Naive thymus-derived CD4-positive, alpha-beta T cell (primary cell): ENCODE measurements at regions of chr7 and their contacts with region 1.

Region 1: DNA sequence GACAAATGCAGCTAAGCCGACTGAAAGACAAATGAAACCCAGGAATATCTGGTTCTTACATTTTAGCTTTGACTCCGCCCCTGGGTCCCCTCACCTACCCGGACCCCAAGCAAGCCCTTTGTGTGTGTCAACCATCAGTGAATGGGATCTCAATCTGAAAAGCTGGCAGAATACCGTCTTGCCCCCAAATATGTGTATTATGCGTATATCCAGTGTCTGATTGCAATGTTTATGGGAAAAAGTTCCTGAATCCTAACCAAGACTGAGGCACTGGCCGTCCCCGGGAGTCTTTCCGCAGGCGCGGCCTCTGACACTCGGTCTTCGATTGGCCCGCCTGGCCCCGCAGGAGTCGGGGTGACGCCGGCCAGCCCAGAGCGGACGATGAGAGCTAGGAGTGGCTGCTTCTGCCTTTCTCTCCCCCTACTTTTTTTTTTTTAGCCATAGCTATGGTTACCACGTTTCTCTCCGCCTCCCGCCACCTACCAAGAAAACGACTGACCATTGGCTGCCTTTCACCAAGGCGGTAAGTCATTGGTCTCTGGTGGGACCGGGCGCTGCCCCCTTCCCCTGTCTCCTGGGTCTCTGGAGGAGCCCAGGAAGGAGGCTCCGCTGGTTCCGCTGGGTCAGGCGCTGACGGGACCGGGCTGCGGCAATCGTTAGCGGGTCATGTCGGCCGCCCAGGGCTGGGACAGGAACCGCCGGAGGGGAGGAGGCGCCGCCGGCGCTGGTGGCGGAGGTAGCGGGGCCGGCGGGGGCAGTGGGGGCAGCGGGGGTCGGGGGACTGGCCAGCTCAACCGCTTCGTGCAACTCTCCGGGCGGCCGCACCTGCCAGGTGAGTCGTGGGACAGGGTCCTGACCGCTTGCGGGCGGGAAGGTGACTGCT is at the start of gene KLHDC10:
- DNase-seq: peak; percentile 84 to 98 (median 96)
- ATAC-seq: peak; percentile 99
- H3K4me3 ChIP-seq: peak within 1 kb of the TSS; percentile 54
- H3K4me3 Mint-ChIP-seq: peak within 1 kb of the TSS; percentile 80 to 95 (median 92)
- H3K27ac ChIP-seq: peak within 1 kb of the TSS; percentile 82
- H3K27ac Mint-ChIP-seq: peak within 1 kb of the TSS; percentile 81 to 97 (median 90)
- H3K4me1 ChIP-seq: peaks cover 12 to 18% of the 10 kb centered on the region in 2 donors
- H3K4me1 Mint-ChIP-seq: peaks cover 34 to 51% (median 42%) of the 10 kb centered on the region in 7 donors
- H3K27me3 ChIP-seq: no peaks in the 10 kb centered on the region
- H3K27me3 Mint-ChIP-seq: peaks cover 0 to 2% (median 0%) of the 10 kb centered on the region in 5 donors
- total RNA-seq, gene KLHDC10: 14.5 to 20.4 (median 17.3) TPM

Region 2: GRCh38 chr7:128739048-128739962 is 1330.9 kb before region 1 on chr7 and contains the start of gene CALU:
- CTCF ChIA-PET with region 1: no interaction called
- POLR2A ChIA-PET with region 1: no interaction called
- intact Hi-C with region 1: loop called in 1 of 2 experiments (anchors 2 kb)
- DNase-seq: peak; percentile 87 to 95 (median 94)
- ATAC-seq: peak; percentile 98
- H3K4me3 ChIP-seq: peak within 1 kb of the TSS; percentile 86
- H3K4me3 Mint-ChIP-seq: peak within 1 kb of the TSS; percentile 89 to 100 (median 97)
- H3K27ac ChIP-seq: peak within 1 kb of the TSS; percentile 85
- H3K27ac Mint-ChIP-seq: peak within 1 kb of the TSS; percentile 96 to 99 (median 98)
- H3K4me1 ChIP-seq: peaks cover 13% of the 10 kb centered on the region in 2 donors
- H3K4me1 Mint-ChIP-seq: peaks cover 11 to 52% (median 45%) of the 10 kb centered on the region in 7 donors
- H3K27me3 ChIP-seq: no peaks in the 10 kb centered on the region
- H3K27me3 Mint-ChIP-seq: peaks cover 0 to 5% (median 0%) of the 10 kb centered on the region in 5 donors
- total RNA-seq, gene CALU: 18.6 to 36.2 (median 22.6) TPM

Region 3: GRCh38 chr7:130050773-130051125 is 19.5 kb before region 1 on chr7:
- CTCF ChIA-PET with region 1: interaction called, 5 read pairs
- POLR2A ChIA-PET with region 1: interaction called, 8 read pairs
- intact Hi-C with region 1: loop called (anchors 1 kb)
- DNase-seq: no peak
- ATAC-seq: no peak
- H3K4me3 ChIP-seq: peak overlapping the region; percentile 86
- H3K4me3 Mint-ChIP-seq: peak overlapping the region; percentile 94 to 99 (median 98)
- H3K27ac ChIP-seq: peak overlapping the region; percentile 78
- H3K27ac Mint-ChIP-seq: peak overlapping the region; percentile 90 to 99 (median 95)
- H3K4me1 ChIP-seq: peaks cover 5 to 8% of the 10 kb centered on the region in 2 donors
- H3K4me1 Mint-ChIP-seq: peaks cover 6 to 29% (median 14%) of the 10 kb centered on the region in 7 donors
- H3K27me3 ChIP-seq: no peaks in the 10 kb centered on the region
- H3K27me3 Mint-ChIP-seq: peaks cover 0 to 3% (median 0%) of the 10 kb centered on the region in 5 donors

Region 4: DNA sequence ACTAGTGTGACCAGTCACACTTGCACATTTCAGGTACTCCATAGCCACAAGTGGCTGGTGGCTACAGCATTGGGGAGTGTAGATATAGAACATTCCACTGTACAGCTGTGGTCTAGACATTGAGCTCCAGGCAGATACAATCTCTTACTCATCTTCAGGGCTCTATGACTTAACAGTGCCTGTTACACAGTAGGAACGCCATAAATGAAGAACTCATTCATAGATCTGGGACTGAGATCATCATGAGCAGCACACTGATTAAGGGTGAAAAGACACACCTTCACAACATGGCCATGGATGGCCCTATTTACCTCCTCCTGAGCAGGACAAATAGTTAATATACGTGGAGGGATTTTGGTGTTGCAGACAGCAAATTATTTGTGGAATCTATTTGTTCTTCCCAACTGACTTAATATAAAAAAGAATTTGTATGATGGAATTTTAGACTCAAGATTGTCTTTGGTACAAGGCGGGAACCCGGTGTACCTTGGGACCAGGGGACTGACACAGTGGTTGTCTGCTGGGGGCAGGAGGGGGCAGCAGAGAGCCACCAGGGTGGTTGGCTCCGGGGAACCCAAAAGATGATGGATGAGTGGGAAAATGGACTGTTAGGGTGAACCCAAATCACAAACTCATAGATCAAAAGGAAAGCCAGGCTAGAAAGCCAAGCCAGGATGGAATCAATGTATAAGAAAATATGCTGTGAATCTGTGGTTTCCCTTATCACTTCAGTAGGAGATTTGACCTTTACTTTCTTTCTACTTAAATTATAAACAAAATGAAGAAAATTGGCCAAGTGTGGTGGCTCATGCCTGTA is 172.2 kb after region 1 on chr7:
- CTCF ChIA-PET with region 1: interaction called, 3 read pairs
- POLR2A ChIA-PET with region 1: no interaction called
- intact Hi-C with region 1: loop called (anchors 1 to 2 kb)
- DNase-seq: peak; percentile 35 to 67 (median 47)
- ATAC-seq: peak; percentile 77
- H3K4me3 ChIP-seq: no peak overlapping the region
- H3K4me3 Mint-ChIP-seq: peak overlapping the region in 1 of 10 donors; percentile 66
- H3K27ac ChIP-seq: no peak overlapping the region
- H3K27ac Mint-ChIP-seq: peak overlapping the region in 1 of 9 donors; percentile 68
- H3K4me1 ChIP-seq: no peaks in the 10 kb centered on the region
- H3K4me1 Mint-ChIP-seq: peaks cover 0 to 12% (median 8%) of the 10 kb centered on the region in 7 donors
- H3K27me3 ChIP-seq: no peaks in the 10 kb centered on the region
- H3K27me3 Mint-ChIP-seq: peaks cover 0 to 11% (median 0%) of the 10 kb centered on the region in 5 donors

Region 5: DNA sequence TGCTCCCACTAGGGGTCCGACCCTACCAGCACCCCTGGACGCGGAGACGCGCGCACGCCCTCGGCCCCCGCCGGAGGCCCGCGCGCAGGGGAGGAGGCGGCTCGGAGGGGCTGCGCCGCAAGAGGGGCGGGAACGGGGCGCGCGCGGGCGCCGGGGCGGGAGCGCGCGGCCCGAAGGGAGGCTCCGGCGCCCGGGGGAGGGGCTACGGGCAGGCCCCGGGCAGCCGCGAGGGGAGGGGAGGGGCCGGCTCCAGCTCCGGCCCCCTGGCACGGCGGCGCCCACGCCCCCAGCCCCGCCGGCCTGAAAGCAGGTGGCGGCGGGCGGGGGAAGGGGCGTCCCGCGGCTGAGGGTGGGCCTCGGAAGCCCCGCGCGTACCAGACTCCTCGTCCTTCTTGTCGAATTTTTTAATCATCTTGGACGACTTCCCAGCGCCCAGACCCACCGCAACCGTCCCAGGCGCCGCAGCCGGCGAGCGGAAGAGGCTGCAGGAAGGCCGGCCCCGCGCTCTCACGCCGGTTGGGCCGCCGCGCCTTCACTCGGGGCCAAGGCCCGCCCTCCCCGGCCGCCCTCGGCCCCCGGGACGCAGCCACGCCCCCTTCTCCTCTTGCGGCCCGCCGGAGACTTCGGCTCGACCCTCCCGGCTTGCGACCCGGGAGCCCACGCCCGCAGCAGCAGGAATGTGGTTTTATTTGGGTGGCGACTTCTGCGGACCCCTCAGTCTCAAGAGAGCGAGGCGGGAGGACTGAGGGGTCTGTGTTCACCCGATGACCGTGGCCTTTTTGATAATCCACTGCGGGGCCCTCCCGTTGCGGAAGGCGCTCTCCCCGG is 598.3 kb after region 1 on chr7 and contains the start of gene COPG2:
- CTCF ChIA-PET with region 1: no interaction called
- POLR2A ChIA-PET with region 1: no interaction called
- intact Hi-C with region 1: loop called (anchors 2 kb)
- DNase-seq: peak; percentile 26 to 90 (median 46)
- ATAC-seq: peak; percentile 93
- H3K4me3 ChIP-seq: peak within 1 kb of the TSS; percentile 64
- H3K4me3 Mint-ChIP-seq: peak within 1 kb of the TSS; percentile 85 to 95 (median 90)
- H3K27ac ChIP-seq: peak within 1 kb of the TSS; percentile 73
- H3K27ac Mint-ChIP-seq: peak within 1 kb of the TSS; percentile 38 to 93 (median 81)
- H3K4me1 ChIP-seq: no peaks in the 10 kb centered on the region
- H3K4me1 Mint-ChIP-seq: peaks cover 6 to 23% (median 21%) of the 10 kb centered on the region in 7 donors
- H3K27me3 ChIP-seq: no peaks in the 10 kb centered on the region
- H3K27me3 Mint-ChIP-seq: peaks cover 0 to 11% (median 0%) of the 10 kb centered on the region in 5 donors
- total RNA-seq, gene COPG2: 8.1 to 12.4 (median 9.4) TPM

Region 6: GRCh38 chr7:130961128-130961601 is 890.9 kb after region 1 on chr7:
- CTCF ChIA-PET with region 1: no interaction called
- POLR2A ChIA-PET with region 1: no interaction called
- intact Hi-C with region 1: loop called in 1 of 2 experiments (anchors 5 kb)
- DNase-seq: peak; percentile 37 to 88 (median 79)
- ATAC-seq: peak; percentile 87
- H3K4me3 ChIP-seq: peak overlapping the region; percentile 65
- H3K4me3 Mint-ChIP-seq: peak overlapping the region; percentile 87 to 98 (median 90)
- H3K27ac ChIP-seq: peak overlapping the region; percentile 80
- H3K27ac Mint-ChIP-seq: peak overlapping the region in 8 of 9 donors; percentile 94 to 100 (median 97)
- H3K4me1 ChIP-seq: peaks cover 50 to 60% of the 10 kb centered on the region in 2 donors
- H3K4me1 Mint-ChIP-seq: peaks cover 53 to 76% (median 69%) of the 10 kb centered on the region in 7 donors
- H3K27me3 ChIP-seq: no peaks in the 10 kb centered on the region
- H3K27me3 Mint-ChIP-seq: no peaks in the 10 kb centered on the region